Caco-2 (cell line): ENCODE measurements at regions of chr20 and their contacts with region 1.

Region 1: GRCh38 chr20:40945754-40946450 is 82.7 kb upstream of the TOP1 start:
- DNase-seq: peak; percentile 82 to 86
- H3K4me3 ChIP-seq: no peak overlapping the region
- H3K4me3 Mint-ChIP-seq: no peak overlapping the region
- H3K27ac Mint-ChIP-seq: no peak overlapping the region
- H3K4me1 ChIP-seq: peaks cover 8% of the 10 kb centered on the region
- H3K4me1 Mint-ChIP-seq: no peaks in the 10 kb centered on the region
- H3K27me3 ChIP-seq: no peaks in the 10 kb centered on the region
- H3K27me3 Mint-ChIP-seq: peaks cover 19% of the 10 kb centered on the region
- CTCF ChIP-seq: peak; percentile 84 to 99

Region 2: GRCh38 chr20:40706977-40707582 is 238.8 kb before region 1 on chr20:
- CTCF ChIA-PET with region 1: interaction called, 14 read pairs
- POLR2A ChIA-PET with region 1: no interaction called
- intact Hi-C with region 1: loop called (anchors 1 kb)
- DNase-seq: peak; percentile 91 to 92
- H3K4me3 ChIP-seq: no peak overlapping the region
- H3K4me3 Mint-ChIP-seq: peak overlapping the region; percentile 12
- H3K27ac Mint-ChIP-seq: peak overlapping the region; percentile 3
- H3K4me1 ChIP-seq: peaks cover 19% of the 10 kb centered on the region
- H3K4me1 Mint-ChIP-seq: peaks cover 10% of the 10 kb centered on the region
- H3K27me3 ChIP-seq: peaks cover 3% of the 10 kb centered on the region; the same call in 1 of the 2 replicates
- H3K27me3 Mint-ChIP-seq: peaks cover 17% of the 10 kb centered on the region
- CTCF ChIP-seq: peak; percentile 67 to 94

Region 3: DNA sequence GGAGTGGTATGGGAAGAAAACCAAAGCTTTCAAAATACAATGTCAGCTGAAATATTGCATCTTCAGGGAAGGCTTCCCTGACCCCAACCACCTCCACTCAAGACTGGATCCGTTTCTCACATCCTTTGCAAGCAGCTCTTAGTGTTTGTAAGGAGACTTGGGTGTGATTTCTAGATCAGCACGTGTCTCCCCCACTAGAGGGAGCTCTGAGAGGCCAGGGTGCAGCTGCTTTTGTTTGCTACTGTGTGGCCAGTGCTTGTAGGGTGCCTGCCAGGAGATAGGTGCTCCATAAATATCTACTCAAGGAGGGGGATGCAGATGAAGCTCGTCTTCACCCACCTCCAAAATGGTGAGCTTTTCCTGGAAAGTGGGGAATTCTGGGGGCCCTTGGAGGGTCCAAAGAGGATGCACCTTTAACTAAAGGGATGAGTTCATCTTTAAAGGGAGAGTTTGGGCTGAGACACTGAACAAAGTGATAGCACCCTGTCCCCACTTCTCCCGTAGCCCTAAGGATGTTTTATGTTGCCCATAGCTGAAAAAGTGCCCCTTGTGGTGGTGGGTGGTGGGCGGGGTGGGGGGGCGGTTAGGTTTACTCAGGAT is 204.3 kb before region 1 on chr20:
- CTCF ChIA-PET with region 1: interaction called, 20 read pairs
- POLR2A ChIA-PET with region 1: no interaction called
- intact Hi-C with region 1: loop called (anchors 1 kb)
- DNase-seq: peak; percentile 74 to 82
- H3K4me3 ChIP-seq: no peak overlapping the region
- H3K4me3 Mint-ChIP-seq: no peak overlapping the region
- H3K27ac Mint-ChIP-seq: no peak overlapping the region
- H3K4me1 ChIP-seq: no peaks in the 10 kb centered on the region
- H3K4me1 Mint-ChIP-seq: no peaks in the 10 kb centered on the region
- H3K27me3 ChIP-seq: no peaks in the 10 kb centered on the region; the same call in 1 of the 2 replicates
- H3K27me3 Mint-ChIP-seq: peaks cover 35% of the 10 kb centered on the region
- CTCF ChIP-seq: peak; percentile 91 to 96

Region 4: DNA sequence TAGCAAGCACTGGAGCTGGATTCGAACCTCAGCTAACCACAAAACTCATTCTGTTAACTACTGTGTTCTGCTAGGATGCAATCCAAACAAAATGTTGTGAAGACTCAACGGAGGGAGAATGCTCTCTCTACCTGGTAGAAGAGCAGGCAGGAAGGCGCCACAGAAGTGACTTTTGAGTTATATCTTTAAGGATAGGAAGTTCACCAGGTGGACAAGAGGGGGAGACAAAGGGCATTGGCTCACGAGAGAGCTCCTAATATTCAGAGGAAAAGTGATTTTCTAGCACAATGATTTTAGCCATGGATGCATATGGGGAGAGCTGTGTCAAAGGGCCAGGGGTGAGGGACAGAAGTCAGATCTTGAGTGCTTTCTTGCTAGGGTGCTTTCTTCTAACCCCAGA is 148.5 kb before region 1 on chr20:
- CTCF ChIA-PET with region 1: interaction called, 66 read pairs
- POLR2A ChIA-PET with region 1: no interaction called
- intact Hi-C with region 1: loop called (anchors 1 kb)
- DNase-seq: peak in 1 of 2 experiments; percentile 71
- H3K4me3 ChIP-seq: no peak overlapping the region
- H3K4me3 Mint-ChIP-seq: no peak overlapping the region
- H3K27ac Mint-ChIP-seq: no peak overlapping the region
- H3K4me1 ChIP-seq: no peaks in the 10 kb centered on the region
- H3K4me1 Mint-ChIP-seq: no peaks in the 10 kb centered on the region
- H3K27me3 ChIP-seq: peaks cover 2% of the 10 kb centered on the region
- H3K27me3 Mint-ChIP-seq: peaks cover 23% of the 10 kb centered on the region
- CTCF ChIP-seq: peak; percentile 92 to 97

Region 5: DNA sequence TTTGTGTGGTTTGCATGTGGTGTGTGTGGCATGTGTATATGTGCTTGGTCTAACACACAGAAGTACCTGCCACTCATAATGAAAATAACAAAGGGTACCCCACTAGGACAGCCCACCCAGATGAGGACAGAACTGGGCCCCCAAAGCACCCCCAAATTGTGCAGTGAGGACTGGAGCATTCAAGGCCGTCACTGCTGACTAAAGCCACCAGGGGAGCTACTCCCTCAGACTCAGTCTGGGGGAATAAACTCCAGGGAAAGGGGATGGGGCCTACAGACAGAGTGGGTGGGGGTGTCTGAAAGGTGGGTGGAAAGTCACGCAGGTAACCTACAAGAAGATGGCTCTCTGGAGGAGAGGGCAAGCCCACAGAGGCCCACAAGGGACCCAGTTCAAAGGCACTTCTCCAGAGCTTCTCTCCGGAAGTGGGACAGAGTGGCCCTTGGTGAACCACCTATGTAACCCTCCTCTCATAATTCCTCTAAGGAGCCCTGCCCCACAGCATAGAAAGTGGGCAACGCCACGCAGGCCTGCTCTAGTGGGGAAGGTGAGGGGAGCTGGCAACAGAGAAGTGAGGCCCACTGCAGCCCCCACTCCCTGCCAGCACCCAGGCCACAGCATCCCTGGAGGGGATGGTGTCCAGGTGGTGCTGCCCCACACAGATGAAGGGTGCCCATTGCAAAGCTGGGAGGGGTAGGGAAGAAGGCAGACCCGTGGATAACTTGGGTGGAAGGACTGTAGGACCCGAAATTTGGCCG is 134.1 kb before region 1 on chr20:
- CTCF ChIA-PET with region 1: interaction called, 3 read pairs
- POLR2A ChIA-PET with region 1: no interaction called
- intact Hi-C with region 1: loop called (anchors 5 kb)
- DNase-seq: no peak
- H3K4me3 ChIP-seq: no peak overlapping the region
- H3K4me3 Mint-ChIP-seq: no peak overlapping the region
- H3K27ac Mint-ChIP-seq: no peak overlapping the region
- H3K4me1 ChIP-seq: no peaks in the 10 kb centered on the region
- H3K4me1 Mint-ChIP-seq: no peaks in the 10 kb centered on the region
- H3K27me3 ChIP-seq: peaks cover 9% of the 10 kb centered on the region
- H3K27me3 Mint-ChIP-seq: peaks cover 37% of the 10 kb centered on the region
- CTCF ChIP-seq: peak; percentile 38 to 61

Region 6: GRCh38 chr20:40892649-40893048 is 53.3 kb before region 1 on chr20:
- CTCF ChIA-PET with region 1: interaction called, 31 read pairs
- POLR2A ChIA-PET with region 1: interaction called, 3 read pairs
- intact Hi-C with region 1: loop called (anchors 1 kb)
- DNase-seq: peak; percentile 62 to 64
- H3K4me3 ChIP-seq: no peak overlapping the region
- H3K4me3 Mint-ChIP-seq: no peak overlapping the region
- H3K27ac Mint-ChIP-seq: no peak overlapping the region
- H3K4me1 ChIP-seq: no peaks in the 10 kb centered on the region
- H3K4me1 Mint-ChIP-seq: peaks cover 2% of the 10 kb centered on the region
- H3K27me3 ChIP-seq: no peaks in the 10 kb centered on the region
- H3K27me3 Mint-ChIP-seq: peaks cover 8% of the 10 kb centered on the region
- CTCF ChIP-seq: peak; percentile 58 to 67

Region 7: DNA sequence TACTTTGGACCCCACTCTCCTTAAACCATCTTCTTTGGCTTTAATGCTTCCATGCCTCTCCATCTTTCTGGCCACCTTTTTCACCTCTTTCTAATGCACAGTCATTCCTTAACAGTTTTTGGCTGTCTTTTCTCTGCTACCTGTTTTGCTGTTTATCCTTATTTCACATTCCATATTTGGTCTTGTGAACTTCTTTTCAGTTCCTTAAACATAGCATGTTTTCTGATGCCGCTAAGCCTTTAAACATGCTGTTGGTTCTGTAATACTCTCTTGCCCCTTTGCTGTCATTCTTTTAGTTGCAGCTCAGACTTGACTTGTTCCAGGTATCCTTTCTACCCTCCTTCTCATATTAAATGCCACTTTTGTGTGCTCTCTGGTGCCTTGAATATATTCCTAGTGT is 118.5 kb after region 1 on chr20:
- CTCF ChIA-PET with region 1: no interaction called
- POLR2A ChIA-PET with region 1: no interaction called
- intact Hi-C with region 1: no loop called
- DNase-seq: no peak
- H3K4me3 ChIP-seq: no peak overlapping the region
- H3K4me3 Mint-ChIP-seq: no peak overlapping the region
- H3K27ac Mint-ChIP-seq: no peak overlapping the region
- H3K4me1 ChIP-seq: peaks cover 12% of the 10 kb centered on the region; the same call in 1 of the 2 replicates
- H3K4me1 Mint-ChIP-seq: peaks cover 14% of the 10 kb centered on the region
- H3K27me3 ChIP-seq: no peaks in the 10 kb centered on the region
- H3K27me3 Mint-ChIP-seq: no peaks in the 10 kb centered on the region
- CTCF ChIP-seq: no peak